Lower leg skin (tissue), 4 donors: ENCODE measurements at regions of chr20 and their contacts with region 1.

Region 1: DNA sequence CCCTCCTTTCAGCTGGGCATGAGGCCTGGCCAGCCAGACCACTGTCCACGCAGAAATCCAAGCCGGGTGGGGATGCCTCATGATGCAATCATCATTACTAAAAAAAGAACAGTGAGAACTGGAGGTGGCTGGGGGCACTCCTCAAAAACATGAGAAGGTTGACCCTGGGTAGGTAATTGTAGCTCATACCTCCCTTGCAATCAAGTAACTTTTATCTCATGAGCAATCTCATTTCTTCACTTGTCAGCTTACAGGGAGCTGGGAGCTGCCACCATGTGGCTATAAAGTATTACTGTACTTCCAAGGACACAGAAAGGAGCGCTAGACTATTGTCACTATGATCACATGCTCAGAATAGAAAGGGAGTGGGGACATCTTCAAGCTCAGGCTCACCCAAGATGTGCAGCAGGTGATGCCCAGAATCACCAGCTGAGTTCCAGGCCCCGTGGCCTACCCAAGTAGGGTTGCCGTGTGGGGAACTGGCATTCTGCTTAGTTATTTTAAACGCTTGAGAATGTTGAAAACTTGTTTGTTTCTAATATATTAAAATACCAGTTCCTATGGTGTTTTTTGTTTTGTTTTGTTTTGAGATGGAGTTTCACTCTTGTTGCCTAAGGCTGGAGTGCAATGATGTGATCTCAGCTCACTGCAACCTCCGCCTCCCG is 3.0 kb upstream of the CDH26 start:
- DNase-seq: no peak
- H3K4me3 ChIP-seq: no peak overlapping the region
- CTCF ChIP-seq: no peak
- POLR2A ChIP-seq: no peak

Region 2: DNA sequence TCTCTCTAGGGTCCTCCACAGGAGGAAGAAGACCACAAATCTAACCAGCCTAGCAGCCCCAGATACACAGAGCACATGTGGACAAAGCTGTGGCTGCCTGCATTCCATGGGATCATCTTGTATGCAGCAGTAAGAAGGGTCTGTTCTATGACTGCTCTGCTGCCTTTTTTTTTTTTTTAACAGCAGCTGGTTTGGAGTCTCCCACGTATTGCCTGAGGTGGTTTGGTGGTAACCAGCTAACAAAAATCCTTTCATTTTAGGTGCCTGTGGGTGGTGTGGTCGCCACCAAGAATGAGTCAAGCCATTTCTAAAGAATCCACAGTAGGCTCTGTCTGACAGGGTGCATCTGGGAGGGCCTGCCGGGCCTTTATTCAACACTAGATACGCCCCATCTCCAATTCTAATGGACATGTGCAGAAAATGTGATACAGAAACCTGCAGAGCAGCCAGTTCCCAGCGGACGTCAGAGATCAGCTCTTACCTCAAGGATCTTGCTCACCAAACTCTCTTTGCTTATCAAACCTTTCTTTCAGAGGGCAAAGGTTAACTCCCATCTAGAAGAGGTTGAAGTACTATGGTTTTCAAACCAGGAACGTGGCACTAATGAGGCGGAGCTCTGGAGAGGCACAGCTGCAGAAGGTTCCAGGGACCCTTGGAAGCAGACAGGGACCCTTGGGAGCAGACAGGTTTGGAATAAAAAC is 1136.5 kb before region 1 on chr20:
- intact Hi-C with region 1: no loop called
- DNase-seq: no peak
- H3K4me3 ChIP-seq: no peak overlapping the region
- CTCF ChIP-seq: no peak
- POLR2A ChIP-seq: no peak

Region 3: DNA sequence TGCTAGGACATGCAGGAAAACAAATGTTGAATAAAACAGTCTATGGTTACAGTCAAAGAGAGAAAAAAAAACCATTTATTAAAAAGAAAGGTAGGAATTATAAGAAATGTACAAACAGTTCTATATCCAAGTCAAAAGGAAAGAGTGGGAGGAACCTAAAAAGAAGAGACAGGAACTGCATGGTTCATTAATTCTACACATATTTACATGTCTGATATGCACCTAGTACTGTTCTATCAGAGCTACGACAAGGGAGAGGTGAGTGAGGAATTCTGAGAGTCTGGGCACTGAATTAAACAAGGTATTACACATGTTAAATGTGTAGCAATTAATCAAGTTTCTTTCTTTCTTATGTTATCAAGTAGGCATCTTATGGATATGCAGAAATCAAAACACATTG is 63.7 kb before region 1 on chr20:
- intact Hi-C with region 1: no loop called
- DNase-seq: no peak
- H3K4me3 ChIP-seq: no peak overlapping the region
- CTCF ChIP-seq: no peak
- POLR2A ChIP-seq: no peak

Region 4: DNA sequence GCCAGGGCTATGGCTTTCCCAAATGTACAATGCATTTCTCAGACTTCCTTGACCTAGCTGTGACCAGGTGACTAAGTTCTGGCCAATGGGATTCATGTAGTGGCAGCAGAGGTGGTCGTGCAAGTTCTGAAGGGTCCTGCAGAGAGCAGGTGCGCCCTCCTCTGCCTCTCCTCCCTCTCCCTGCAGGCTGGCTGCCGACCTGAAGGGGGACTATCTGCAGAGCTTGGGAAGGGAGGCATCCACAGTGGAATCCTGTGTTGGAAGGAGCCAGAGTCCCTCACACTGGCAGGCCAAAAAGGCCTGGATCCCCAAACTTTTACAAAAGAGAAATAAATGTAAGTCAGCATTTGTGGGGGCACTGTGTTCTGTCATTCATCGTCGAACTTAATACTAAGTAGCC is 69.5 kb after region 1 on chr20:
- intact Hi-C with region 1: no loop called
- DNase-seq: no peak
- H3K4me3 ChIP-seq: no peak overlapping the region
- CTCF ChIP-seq: no peak
- POLR2A ChIP-seq: no peak

Region 5: DNA sequence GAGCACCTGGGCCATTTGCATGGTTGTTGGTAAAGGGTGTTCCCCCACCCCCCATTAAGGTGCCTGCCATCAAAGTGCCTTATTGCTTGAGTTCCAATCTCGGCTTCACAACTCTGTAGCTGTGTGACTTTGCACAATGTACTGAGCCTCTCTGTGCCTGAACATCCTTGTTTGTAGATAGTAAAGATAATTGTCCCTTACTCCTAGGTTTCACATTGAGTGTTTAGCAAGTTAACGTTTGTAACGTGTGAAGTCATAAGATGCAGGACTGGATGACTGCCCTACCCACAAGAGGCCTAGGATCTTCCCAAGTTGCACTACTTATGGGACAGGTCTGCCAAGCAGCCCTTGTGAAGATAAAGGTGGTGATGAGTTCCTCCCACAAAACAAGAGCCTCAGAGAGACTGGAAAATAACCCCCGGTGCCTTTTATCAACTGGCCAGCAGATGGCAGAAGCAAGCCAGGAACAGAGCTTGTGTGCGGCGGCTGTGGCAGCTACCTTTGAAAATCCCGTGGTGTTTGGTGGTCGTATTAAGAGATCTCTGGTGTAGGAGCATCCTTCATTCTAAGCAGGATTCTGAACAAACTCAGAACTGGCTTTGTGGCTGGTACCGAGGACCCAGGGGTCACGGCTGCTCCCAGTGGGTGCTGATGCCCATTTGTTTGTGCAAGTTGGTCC is 102.0 kb after region 1 on chr20:
- intact Hi-C with region 1: loop called (anchors 10 kb)
- DNase-seq: peak; percentile 54 to 86
- H3K4me3 ChIP-seq: no peak overlapping the region
- CTCF ChIP-seq: no peak
- POLR2A ChIP-seq: no peak